ENCODE measurements at regions of chr1 and their contacts with region 1.

Region 1: DNA sequence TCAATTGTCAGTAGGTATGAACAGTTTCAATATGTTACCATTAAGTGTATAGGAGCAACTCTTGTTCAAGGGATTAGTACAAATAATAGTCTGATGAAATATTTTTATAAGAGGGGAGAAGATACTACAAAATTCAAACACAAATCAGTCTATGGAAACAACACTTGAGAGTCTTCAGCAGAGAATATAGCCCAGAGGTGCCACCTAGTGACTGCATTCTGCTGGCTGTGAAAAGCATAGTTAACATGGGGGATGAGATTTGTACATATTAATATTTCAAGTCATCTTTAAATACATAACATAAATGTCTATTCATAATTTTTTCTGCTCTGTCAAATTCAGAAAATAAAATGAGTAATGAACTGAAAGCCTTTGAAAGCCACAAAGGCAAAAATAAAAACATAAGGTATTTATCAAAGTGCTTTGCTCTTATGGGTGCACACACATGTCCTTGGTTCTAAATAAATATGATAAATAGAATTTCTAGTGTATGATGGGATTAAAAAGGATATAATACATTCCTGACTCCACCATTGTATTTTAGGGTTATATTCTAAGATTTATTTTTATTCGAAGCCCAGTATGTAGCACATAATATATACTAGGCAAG is 440.9 kb upstream of the ZRANB2 start:
- DNase-seq: peak in 1 of 2 donors; percentile 12
- ATAC-seq: no peak
- H3K4me3 ChIP-seq: no peak overlapping the region
- H3K27ac ChIP-seq: no peak overlapping the region
- H3K4me1 ChIP-seq: no peaks in the 10 kb centered on the region
- H3K27me3 ChIP-seq: no peaks in the 10 kb centered on the region
- CTCF ChIP-seq: peak; percentile 33

Region 2: DNA sequence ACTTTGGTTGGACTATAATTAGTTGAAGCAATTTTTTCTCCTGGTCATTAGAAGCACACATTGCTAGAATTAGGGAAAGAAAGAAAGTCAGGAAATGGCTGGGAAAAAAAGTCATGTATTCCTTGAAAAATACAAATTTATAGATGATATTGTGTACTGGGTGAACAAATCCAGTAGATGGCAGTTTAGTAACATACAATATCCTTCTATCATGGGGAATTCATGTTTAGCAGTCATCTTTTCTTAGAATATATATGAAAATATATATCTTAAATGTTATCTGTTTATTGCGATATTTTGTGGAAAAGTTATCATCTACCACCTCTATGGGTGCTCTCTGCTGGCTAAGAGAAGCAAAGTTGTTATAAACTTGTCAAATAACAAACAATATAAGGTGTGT is 427.8 kb before region 1 on chr1:
- intact Hi-C with region 1: loop called in 1 of 2 experiments (anchors 5 kb)
- DNase-seq: no peak
- ATAC-seq: no peak
- H3K4me3 ChIP-seq: no peak overlapping the region
- H3K27ac ChIP-seq: no peak overlapping the region
- H3K4me1 ChIP-seq: no peaks in the 10 kb centered on the region
- H3K27me3 ChIP-seq: peaks cover 0 to 4% (median 0%) of the 10 kb centered on the region in 3 donors
- CTCF ChIP-seq: peak; percentile 37

Region 3: DNA sequence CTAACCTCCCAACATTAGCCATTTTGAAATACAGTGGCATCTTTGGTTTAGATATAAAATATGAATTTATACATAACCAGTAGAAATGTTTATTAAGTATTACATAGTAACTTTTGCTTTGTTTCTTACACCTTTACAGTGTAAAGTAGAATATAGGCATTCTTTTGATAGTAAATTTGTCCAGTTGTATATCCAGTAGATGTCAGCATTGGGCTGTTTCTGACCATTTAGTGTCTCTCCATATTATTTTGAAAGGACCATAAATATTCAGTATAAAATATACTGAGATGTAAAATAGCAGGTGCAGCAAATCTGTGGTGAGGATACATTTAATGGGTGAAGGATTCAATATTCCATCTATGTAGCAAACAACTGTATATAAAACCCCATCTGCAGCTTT is 325.1 kb before region 1 on chr1:
- intact Hi-C with region 1: loop called in 1 of 2 experiments (anchors 10 kb)
- DNase-seq: no peak
- ATAC-seq: no peak
- H3K4me3 ChIP-seq: no peak overlapping the region
- H3K27ac ChIP-seq: no peak overlapping the region
- H3K4me1 ChIP-seq: no peaks in the 10 kb centered on the region
- H3K27me3 ChIP-seq: no peaks in the 10 kb centered on the region
- CTCF ChIP-seq: peak; percentile 32

Measured in psoas muscle (tissue), 8 donors.